ENCODE measurements at regions of chr4 and their contacts with region 1.

Region 1: GRCh38 chr4:6986781-6987587 is 56.2 kb upstream of the TADA2B start:
- DNase-seq: peak; percentile 94 to 97 (median 96)
- ATAC-seq: peak; percentile 92 to 96 (median 96)
- H3K4me3 ChIP-seq: peak overlapping the region; percentile 62 to 98 (median 85)
- H3K27ac ChIP-seq: peak overlapping the region; percentile 80 to 98 (median 93)
- H3K4me1 ChIP-seq: peaks cover 6 to 88% (median 51%) of the 10 kb centered on the region in 12 donors
- H3K27me3 ChIP-seq: no peaks in the 10 kb centered on the region
- CTCF ChIP-seq: peak in 2 of 12 donors; percentile 6 to 12
- POLR2A ChIP-seq: peak; percentile 54 to 73

Region 2: DNA sequence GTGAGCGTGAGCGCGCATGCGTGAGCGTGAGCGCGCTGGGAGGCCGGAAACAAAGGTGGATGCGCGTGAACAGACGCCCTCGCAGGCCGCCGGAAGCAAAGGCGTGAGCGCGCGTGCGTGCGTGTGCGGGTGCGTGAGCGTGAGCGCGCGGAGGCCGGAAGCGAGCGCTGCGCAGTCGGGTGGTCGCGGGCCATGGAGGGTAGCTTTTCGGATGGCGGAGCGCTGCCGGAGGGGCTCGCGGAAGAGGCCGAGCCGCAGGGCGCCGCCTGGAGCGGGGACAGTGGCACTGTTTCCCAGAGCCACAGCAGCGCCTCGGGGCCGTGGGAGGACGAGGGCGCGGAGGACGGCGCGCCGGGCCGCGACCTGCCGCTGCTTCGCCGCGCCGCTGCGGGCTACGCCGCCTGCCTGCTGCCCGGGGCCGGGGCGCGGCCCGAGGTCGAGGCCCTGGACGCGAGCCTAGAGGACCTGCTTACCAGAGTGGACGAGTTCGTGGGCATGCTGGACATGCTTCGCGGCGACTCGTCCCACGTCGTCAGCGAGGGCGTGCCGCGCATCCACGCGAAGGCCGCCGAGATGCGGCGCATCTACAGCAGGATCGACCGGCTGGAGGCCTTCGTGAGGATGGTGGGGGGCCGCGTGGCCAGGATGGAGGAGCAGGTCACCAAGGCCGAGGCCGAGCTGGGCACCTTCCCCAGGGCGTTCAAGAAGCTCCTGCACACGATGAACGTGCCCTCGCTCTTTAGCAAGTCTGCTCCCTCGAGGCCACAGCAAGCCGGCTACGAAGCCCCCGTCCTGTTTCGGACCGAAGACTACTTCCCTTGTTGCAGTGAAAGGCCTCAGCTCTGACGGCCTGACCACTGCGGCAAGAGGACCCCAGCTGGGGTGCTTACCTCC is 270.7 kb before region 1 on chr4 and contains the start of gene BLOC1S4:
- intact Hi-C with region 1: loop called in 5 of 10 experiments (anchors 5 to 10 kb)
- DNase-seq: peak; percentile 88 to 94 (median 91)
- ATAC-seq: peak; percentile 84 to 94 (median 93)
- H3K4me3 ChIP-seq: peak within 1 kb of the TSS; percentile 64 to 94 (median 76)
- H3K27ac ChIP-seq: peak within 1 kb of the TSS; percentile 80 to 97 (median 94)
- H3K4me1 ChIP-seq: peaks cover 6 to 38% (median 27%) of the 10 kb centered on the region in 12 donors
- H3K27me3 ChIP-seq: no peaks in the 10 kb centered on the region
- CTCF ChIP-seq: peak in 5 of 12 donors; percentile 13 to 36 (median 16)
- POLR2A ChIP-seq: peak in 1 of 2 donors; percentile 84
- total RNA-seq, gene BLOC1S4: 5.8 to 14.1 (median 7.8) TPM

Region 3: GRCh38 chr4:6909073-6909965 is 77.7 kb before region 1 on chr4 and contains the start of gene TBC1D14:
- intact Hi-C with region 1: loop called in 8 of 10 experiments (anchors 2 to 10 kb)
- DNase-seq: peak; percentile 90 to 95 (median 91)
- ATAC-seq: peak; percentile 71 to 95 (median 94)
- H3K4me3 ChIP-seq: peak within 1 kb of the TSS; percentile 54 to 99 (median 90)
- H3K27ac ChIP-seq: peak within 1 kb of the TSS; percentile 95 to 100 (median 99)
- H3K4me1 ChIP-seq: peaks cover 4 to 57% (median 34%) of the 10 kb centered on the region in 12 donors
- H3K27me3 ChIP-seq: no peaks in the 10 kb centered on the region
- CTCF ChIP-seq: peak in 7 of 12 donors; percentile 15 to 45 (median 31)
- POLR2A ChIP-seq: peak in 1 of 2 donors; percentile 55
- total RNA-seq, gene TBC1D14: 31.3 to 51.0 (median 34.5) TPM

Region 4: GRCh38 chr4:7042697-7043464 is 55.9 kb after region 1 on chr4 and contains the start of gene TADA2B:
- intact Hi-C with region 1: loop called in 9 of 10 experiments (anchors 1 to 10 kb)
- DNase-seq: peak; percentile 96 to 99 (median 98)
- ATAC-seq: peak; percentile 93 to 97 (median 95)
- H3K4me3 ChIP-seq: peak within 1 kb of the TSS; percentile 86 to 99 (median 99)
- H3K27ac ChIP-seq: peak within 1 kb of the TSS; percentile 79 to 95 (median 92)
- H3K4me1 ChIP-seq: peaks cover 8 to 56% (median 45%) of the 10 kb centered on the region in 12 donors
- H3K27me3 ChIP-seq: no peaks in the 10 kb centered on the region
- CTCF ChIP-seq: peak in 11 of 12 donors; percentile 17 to 60 (median 47)
- POLR2A ChIP-seq: peak in 1 of 2 donors; percentile 34
- total RNA-seq, gene TADA2B: 24.5 to 40.2 (median 30.8) TPM

Region 5: DNA sequence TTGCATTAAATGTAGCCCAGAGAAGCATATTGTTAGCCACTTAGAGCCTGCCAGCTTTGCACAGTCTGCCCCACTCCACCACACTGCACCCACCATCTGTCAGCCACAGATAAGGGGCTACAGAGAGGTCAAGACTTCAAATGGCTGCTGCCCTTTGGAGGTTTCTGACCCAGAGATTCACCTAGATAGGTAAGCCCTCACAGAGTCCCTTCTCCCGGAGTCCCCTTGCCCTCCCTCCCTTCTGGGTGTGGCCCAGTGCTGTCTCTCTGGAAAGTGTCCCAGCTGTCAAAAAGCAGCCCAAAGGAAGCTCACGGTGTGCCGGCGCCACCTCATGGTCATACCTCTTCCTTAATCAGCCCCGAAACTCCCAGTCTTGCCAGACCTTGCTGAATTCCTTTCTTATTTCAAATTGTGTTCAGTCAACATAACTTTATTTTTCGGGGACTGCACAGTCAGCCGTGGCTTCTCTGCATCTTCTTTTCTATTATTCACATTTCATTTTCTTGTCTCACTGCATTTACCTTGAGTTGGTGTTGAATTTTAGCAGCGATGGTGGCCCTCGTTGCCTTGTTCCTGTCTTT is 95.0 kb after region 1 on chr4:
- intact Hi-C with region 1: loop called in 1 of 10 experiments (anchors 5 kb)
- DNase-seq: peak in 4 of 5 donors; percentile 62 to 76 (median 69)
- ATAC-seq: peak; percentile 76 to 94 (median 89)
- H3K4me3 ChIP-seq: no peak overlapping the region
- H3K27ac ChIP-seq: no peak overlapping the region
- H3K4me1 ChIP-seq: peaks cover 0 to 6% (median 0%) of the 10 kb centered on the region in 12 donors
- H3K27me3 ChIP-seq: peaks cover 0 to 34% (median 0%) of the 10 kb centered on the region in 9 donors
- CTCF ChIP-seq: peak; percentile 33 to 63 (median 44)
- POLR2A ChIP-seq: no peak

Measured in heart left ventricle (tissue), 16 donors.